ENCODE measurements at regions of chr14 and their contacts with region 1.

Region 1: DNA sequence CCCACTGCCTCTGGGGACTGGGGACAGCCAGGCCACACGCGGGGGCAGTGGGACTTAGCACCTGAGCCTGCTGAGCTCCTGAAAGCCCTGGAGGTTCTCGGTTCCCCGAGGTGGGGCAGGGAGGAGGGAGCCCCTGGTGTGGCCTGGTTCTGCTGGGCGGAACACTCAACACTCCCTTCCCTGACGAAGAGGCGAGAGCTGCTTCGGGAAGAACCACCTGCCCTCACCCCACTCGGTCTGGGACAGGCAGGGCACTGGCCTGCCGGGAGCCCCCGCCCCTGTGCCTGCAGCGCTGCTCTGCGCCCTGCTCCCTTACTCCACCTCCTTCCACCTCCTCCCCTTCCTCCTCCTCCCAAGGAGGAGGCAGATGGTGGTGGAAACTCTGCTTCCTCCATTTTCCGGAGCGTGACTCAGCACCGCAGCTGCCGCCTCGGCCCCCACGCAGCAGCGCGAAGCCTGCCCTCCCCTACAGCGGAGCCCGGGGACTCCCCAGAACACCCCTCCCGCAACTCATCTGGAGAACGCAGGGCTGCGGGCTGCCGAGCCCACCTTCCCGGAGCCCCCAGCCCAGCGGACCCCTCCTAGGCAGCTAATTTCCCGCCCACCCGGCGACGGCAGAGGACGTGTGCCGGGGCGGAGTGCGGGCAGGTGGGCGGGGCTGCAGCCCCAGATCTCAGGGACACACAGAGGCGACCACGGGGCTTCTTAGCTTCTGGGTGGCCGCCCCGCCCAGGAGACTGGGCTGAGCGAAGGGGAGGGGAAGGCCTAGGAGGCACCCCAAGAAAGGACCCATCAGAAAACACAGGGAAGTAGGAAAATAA is 11.7 kb upstream of the INF2 start:
- DNase-seq: peak; percentile 76
- ATAC-seq: peak; percentile 83
- H3K4me3 Mint-ChIP-seq: peak overlapping the region; percentile 70
- H3K27ac Mint-ChIP-seq: peak overlapping the region; percentile 84
- H3K4me1 Mint-ChIP-seq: peaks cover 28% of the 10 kb centered on the region
- H3K27me3 Mint-ChIP-seq: peaks cover 10% of the 10 kb centered on the region

Region 2: DNA sequence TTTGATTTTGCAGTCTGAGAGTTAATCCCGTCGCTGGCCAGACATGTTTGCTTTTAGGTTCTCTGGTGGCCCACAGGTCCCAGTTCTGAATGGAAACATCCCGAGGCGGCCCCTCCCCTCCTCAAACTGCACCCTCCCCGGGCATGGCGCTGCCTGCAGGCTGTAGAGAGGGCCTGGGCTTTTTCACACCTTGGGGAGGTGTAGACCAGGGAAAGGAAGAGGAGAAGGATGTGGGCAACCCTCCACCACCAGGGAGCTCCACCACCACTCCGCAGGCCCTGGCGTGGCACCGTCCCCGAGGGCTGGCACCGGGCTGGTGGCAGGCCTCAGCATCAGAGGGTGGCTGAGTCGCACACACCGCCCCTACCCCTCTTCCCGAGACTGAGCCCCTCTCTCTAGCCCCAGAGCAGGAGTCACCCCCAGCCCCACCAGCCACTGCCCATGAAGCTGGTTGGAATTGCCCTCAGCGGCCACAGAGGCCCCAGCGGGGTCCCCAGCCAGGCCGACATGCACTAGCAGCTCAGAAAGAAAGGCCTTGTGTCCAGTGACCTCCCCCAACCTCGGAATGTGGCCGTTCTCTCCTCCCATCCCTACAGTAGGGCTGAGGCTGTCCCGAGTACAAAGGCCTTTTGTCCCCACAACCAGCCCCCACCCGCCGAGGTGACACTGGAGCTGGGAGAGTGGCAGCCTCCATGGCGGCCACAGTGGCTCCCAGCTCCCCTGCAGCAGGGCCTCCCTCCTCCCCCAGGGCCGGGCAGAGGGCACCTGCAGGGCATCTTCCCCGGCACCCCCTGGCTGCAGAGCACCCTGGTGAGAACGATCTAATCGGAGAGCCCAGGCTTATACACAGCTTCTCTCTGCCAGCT is 11.8 kb before region 1 on chr14:
- CTCF ChIA-PET with region 1: interaction called, 11 read pairs
- POLR2A ChIA-PET with region 1: interaction called, 4 read pairs
- DNase-seq: peak; percentile 64
- ATAC-seq: peak; percentile 93
- H3K4me3 Mint-ChIP-seq: no peak overlapping the region
- H3K27ac Mint-ChIP-seq: peak overlapping the region; percentile 67
- H3K4me1 Mint-ChIP-seq: peaks cover 29% of the 10 kb centered on the region
- H3K27me3 Mint-ChIP-seq: peaks cover 33% of the 10 kb centered on the region

Region 3: GRCh38 chr14:104689109-104689880 is 11.6 kb after region 1 on chr14 and contains the start of gene INF2:
- CTCF ChIA-PET with region 1: interaction called, 5 read pairs
- POLR2A ChIA-PET with region 1: interaction called, 14 read pairs
- DNase-seq: peak; percentile 56
- ATAC-seq: peak; percentile 59
- H3K4me3 Mint-ChIP-seq: peak within 1 kb of the TSS; percentile 81
- H3K27ac Mint-ChIP-seq: peak within 1 kb of the TSS; percentile 61
- H3K4me1 Mint-ChIP-seq: peaks cover 76% of the 10 kb centered on the region
- H3K27me3 Mint-ChIP-seq: no peaks in the 10 kb centered on the region
- total RNA-seq, gene INF2: 155 to 159 TPM

Measured in activated CD8-positive, alpha-beta T cell treated with anti-CD3 and anti-CD28 coated beads, Interleukin-2, amount 10 ng/mL, durations not matched to agents 7 days and 5 days (primary cell).